ENCODE measurements at regions of chr5 and their contacts with region 1.

Region 1: DNA sequence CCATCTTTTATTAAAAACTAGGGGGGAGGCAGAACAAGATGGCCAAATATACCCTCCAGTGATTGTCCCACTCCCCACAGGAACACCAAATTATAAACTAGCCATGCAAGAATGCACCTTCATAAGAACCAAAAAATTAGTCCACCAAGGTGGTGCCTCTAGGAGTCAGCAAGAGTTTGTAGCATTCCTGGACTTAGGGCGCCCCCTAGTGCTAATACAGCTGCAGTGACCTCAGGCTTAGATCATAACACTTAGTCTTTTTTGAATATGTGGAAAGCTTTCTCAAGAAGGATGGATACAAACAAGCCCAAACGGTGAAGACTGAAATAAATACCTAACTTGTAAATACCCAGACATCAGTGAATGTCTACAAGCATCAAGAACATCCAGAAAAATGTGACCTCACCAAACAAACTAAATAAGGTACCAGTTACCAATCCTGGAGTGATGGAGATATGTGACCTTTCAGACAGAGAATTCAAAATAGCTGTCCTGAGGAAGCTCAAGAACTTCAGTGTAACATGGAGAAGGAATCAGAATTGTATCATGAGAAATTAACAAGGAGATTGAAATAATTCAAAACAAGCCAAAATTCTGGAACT is 19.3 kb downstream of the PPIP5K2 start:
- DNase-seq: peak; percentile 64
- H3K4me3 Mint-ChIP-seq: no peak overlapping the region
- H3K27ac Mint-ChIP-seq: no peak overlapping the region
- H3K4me1 Mint-ChIP-seq: peaks cover 4% of the 10 kb centered on the region
- H3K27me3 Mint-ChIP-seq: no peaks in the 10 kb centered on the region

Region 2: DNA sequence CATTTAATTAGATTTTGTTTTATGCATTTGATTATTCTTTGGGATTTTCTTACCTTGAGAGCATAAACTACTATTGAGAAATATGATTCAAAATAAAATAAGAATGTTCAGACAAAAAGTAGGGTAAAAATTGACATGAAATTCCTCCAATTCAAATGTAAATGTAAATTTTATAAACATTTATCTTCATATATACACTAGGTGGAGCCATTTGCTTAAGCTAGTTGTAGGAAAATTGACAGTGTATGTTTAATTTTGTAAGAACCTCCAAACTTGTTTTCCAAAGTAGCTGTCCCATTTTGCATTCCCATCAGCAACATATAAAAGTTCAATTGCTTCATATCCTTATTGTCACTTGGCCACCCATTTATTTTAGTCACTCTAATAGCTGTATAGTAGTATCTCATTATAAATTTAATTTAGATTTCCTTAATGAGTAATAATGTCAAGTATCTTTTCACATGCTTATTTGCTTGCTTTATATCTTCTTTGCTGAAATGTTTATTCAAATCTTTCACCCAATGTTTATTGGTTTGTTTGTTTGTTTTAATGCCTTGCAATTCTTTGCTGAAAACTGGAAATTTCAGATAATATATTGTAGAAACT is 602.9 kb before region 1 on chr5:
- intact Hi-C with region 1: loop called (anchors 2 kb)
- DNase-seq: no peak
- H3K4me3 Mint-ChIP-seq: no peak overlapping the region
- H3K27ac Mint-ChIP-seq: no peak overlapping the region
- H3K4me1 Mint-ChIP-seq: no peaks in the 10 kb centered on the region
- H3K27me3 Mint-ChIP-seq: peaks cover 2% of the 10 kb centered on the region

Region 3: GRCh38 chr5:102583276-102584124 is 555.9 kb before region 1 on chr5:
- intact Hi-C with region 1: loop called (anchors 1 kb)
- DNase-seq: no peak
- H3K4me3 Mint-ChIP-seq: no peak overlapping the region
- H3K27ac Mint-ChIP-seq: no peak overlapping the region
- H3K4me1 Mint-ChIP-seq: peaks cover 1% of the 10 kb centered on the region
- H3K27me3 Mint-ChIP-seq: peaks cover 10% of the 10 kb centered on the region

Region 4: DNA sequence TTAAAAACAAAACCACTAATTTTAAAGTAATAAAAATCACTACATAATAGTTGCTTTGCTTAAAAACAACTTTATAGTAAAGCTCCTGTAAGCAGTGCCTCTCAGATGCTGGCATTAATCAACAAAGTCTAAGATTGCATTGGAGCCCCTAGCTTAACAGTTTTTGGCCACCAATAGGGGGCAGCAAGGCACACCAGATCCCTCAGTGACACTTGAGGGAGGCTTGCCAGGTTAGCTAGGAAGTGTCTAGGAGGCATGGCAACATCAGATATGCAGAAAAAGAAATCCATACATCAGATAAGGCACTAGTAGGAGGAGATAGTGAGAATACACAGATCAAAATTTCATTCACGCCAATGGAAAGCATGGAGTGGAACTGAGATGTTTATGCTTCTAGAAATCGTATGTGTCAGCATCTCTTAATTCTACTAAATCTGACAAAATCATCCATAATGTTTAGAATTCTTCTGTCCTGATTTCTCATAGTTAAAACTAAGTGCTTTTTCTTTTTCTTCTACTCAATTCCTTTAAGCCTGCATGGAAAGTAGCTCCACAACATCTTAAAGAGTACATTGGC is 457.9 kb before region 1 on chr5:
- intact Hi-C with region 1: loop called (anchors 1 kb)
- DNase-seq: peak; percentile 23
- H3K4me3 Mint-ChIP-seq: no peak overlapping the region
- H3K27ac Mint-ChIP-seq: no peak overlapping the region
- H3K4me1 Mint-ChIP-seq: no peaks in the 10 kb centered on the region
- H3K27me3 Mint-ChIP-seq: peaks cover 8% of the 10 kb centered on the region

Region 5: DNA sequence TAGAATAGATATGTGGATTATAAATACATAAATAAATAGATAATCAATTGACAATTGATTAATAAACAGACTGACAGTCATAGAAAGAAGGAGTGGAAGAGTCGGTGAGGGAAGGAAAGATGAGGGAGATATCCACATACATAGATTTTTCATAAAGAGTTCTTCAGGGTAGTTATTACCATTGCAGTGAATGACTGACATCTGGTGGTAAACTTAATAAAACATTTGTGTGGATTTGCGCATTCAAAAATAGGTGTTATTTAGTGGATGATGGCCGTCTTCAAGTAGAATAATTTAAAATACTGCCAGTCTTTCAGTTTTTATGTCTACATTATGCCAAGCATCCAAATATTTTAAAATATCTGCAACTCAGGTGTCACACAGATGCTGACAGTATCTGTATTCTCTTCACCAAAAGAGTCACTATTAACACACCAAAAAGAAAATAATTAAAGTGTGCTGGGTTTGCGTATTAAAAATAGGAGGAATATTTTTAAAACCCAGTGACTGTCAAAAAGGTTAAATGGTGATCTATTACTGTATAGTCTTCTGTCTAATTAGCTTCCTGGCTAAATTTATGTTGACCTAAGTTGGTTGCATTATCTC is 98.2 kb before region 1 on chr5:
- intact Hi-C with region 1: loop called (anchors 5 kb)
- DNase-seq: no peak
- H3K4me3 Mint-ChIP-seq: no peak overlapping the region
- H3K27ac Mint-ChIP-seq: no peak overlapping the region
- H3K4me1 Mint-ChIP-seq: no peaks in the 10 kb centered on the region
- H3K27me3 Mint-ChIP-seq: peaks cover 17% of the 10 kb centered on the region

Region 6: DNA sequence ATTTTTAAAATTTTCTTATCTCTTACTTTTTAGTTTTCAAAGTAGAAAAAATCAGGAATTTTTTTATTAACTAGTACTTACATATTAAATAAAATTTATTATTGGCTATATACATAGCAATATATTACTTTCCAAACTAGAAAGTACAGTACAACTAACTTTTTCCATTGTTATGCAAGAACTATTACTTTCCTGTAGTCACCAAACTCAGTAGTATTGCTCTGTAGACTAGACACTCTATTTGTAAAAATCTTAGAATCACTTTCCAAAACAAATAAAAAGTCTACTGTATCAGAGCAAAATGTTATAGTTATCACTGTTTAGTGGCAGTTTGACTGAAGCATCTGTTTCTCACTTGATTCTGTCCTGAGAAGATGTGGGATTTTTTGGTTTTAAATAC is 63.9 kb after region 1 on chr5:
- intact Hi-C with region 1: no loop called
- DNase-seq: no peak
- H3K4me3 Mint-ChIP-seq: no peak overlapping the region
- H3K27ac Mint-ChIP-seq: no peak overlapping the region
- H3K4me1 Mint-ChIP-seq: peaks cover 20% of the 10 kb centered on the region
- H3K27me3 Mint-ChIP-seq: no peaks in the 10 kb centered on the region

Measured in activated T-helper 2 cell treated with anti-CD3 and anti-CD28 coated beads, Interferon-gamma antibody, Interleukin-2, Interleukin-4, amounts not matched to agents 10 μg/mL and 5 μg/mL and 100 μg/mL, durations not matched to agents 14 hours and 24 hours and 36 hours (primary cell).